Prostate gland (tissue), 2 donors: ENCODE measurements at regions of chr20 and their contacts with region 1.

Region 1: GRCh38 chr20:46022411-46023147 is 6.4 kb upstream of the SLC12A5 start:
- DNase-seq: no peak
- H3K4me3 ChIP-seq: no peak overlapping the region
- H3K27ac ChIP-seq: no peak overlapping the region
- H3K4me1 ChIP-seq: no peaks in the 10 kb centered on the region
- H3K27me3 ChIP-seq: peaks cover 23% of the 10 kb centered on the region
- CTCF ChIP-seq: peak; percentile 34 to 74 (median 63)
- POLR2A ChIP-seq: no peak

Region 2: GRCh38 chr20:45792332-45792686 is 230.3 kb before region 1 on chr20:
- intact Hi-C with region 1: no loop called
- DNase-seq: no peak
- H3K4me3 ChIP-seq: peak overlapping the region; percentile 69 to 76
- H3K27ac ChIP-seq: peak overlapping the region; percentile 76 to 79
- H3K4me1 ChIP-seq: no peaks in the 10 kb centered on the region
- H3K27me3 ChIP-seq: no peaks in the 10 kb centered on the region
- CTCF ChIP-seq: no peak
- POLR2A ChIP-seq: no peak

Region 3: DNA sequence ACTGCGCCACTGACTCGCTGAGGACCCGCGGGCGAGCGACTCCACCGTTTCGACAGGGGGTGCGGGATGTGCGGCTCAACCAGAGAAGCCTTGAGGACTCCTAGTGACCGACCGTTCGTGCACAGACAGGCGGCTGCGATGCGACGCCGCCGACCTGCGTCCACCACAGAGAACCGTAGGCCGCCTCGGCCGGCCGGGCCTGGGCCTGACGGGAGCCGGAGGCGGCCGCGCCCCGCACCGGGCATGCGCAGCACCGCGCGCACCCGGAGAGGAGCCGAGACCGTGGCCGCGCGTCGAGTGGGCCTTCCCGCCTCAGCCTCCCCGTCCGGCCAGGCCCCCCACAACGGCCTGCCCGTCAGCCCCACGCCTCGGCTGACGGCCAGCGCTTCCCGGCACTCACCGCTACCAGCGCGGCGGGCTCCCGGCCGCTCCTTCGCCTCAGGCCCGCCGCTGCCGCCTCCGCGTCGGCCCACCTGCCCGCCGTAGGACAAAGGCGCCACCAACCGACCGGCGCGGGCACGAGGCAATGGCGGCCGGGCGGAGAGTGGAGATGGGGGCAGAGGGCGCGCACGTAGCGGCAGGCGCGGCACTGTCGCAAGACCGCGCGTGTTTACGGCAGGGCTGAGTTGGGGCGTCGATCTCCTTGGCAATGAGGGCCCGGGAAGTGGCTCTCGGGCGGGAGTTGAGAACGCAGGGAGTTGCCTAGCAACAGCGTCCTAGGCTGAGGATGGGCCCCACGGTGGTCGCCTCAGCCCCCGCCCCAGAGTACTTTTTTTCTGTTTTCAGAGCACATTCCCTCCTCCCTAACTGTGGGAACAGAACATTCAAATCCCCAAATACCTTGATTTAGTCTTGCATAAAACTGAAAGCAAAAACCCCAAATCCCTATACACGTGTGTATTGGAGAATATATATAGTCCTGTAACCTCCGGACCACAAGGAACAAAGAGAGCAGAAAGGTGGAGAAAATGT is 67.1 kb after region 1 on chr20 and contains the start of gene NCOA5:
- intact Hi-C with region 1: loop called (anchors 10 kb)
- DNase-seq: peak; percentile 96
- H3K4me3 ChIP-seq: peak within 1 kb of the TSS; percentile 71 to 81
- H3K27ac ChIP-seq: peak within 1 kb of the TSS; percentile 97
- H3K4me1 ChIP-seq: peaks cover 8% of the 10 kb centered on the region
- H3K27me3 ChIP-seq: no peaks in the 10 kb centered on the region
- CTCF ChIP-seq: peak in 3 of 4 experiments; percentile 48 to 49 (median 49)
- POLR2A ChIP-seq: peak; percentile 67
- total RNA-seq, gene NCOA5: 41.0 to 50.6 TPM